Activated T-helper 1 cell treated with anti-CD3 and anti-CD28 coated beads, Interleukin-12 subunit alpha, Interleukin-12 subunit beta, Interleukin-2, Interleukin-4 antibody, amounts not matched to agents 30 ng/mL and 10 ng/mL and 1 ng/mL, durations not matched to agents 14 hours and 24 hours and 36 hours (primary cell): ENCODE measurements at regions of chr1 and their contacts with region 1.

Region 1: DNA sequence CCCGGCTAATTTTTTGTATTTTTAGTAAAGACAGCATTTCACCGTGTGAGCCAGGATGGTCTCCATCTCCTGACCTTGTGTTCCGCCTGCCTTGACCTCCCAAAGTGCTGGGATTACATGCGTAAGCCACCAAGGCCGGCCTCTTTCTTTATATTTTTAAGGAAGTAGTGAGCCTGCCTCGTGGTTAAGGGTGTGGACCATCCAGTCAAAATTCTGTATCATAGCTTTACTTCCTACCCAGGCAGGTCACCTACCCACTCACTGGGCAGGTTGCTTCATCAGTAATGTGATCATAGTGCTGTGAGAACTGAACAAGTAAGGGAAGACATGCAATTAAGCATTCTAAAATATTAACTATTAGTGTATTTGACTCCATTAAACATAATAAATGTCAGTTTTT is 8.1 kb upstream of the ACOT7 start:
- DNase-seq: no peak
- H3K4me3 Mint-ChIP-seq: no peak overlapping the region
- H3K27ac Mint-ChIP-seq: no peak overlapping the region
- H3K4me1 Mint-ChIP-seq: peaks cover 7% of the 10 kb centered on the region
- H3K27me3 Mint-ChIP-seq: peaks cover 20% of the 10 kb centered on the region

Region 2: GRCh38 chr1:6343506-6344405 is 57.9 kb before region 1 on chr1:
- intact Hi-C with region 1: loop called (anchors 1 kb)
- DNase-seq: peak; percentile 58
- H3K4me3 Mint-ChIP-seq: no peak overlapping the region
- H3K27ac Mint-ChIP-seq: no peak overlapping the region
- H3K4me1 Mint-ChIP-seq: peaks cover 18% of the 10 kb centered on the region
- H3K27me3 Mint-ChIP-seq: peaks cover 1% of the 10 kb centered on the region

Region 3: GRCh38 chr1:6359216-6360116 is 42.2 kb before region 1 on chr1:
- intact Hi-C with region 1: loop called (anchors 1 kb)
- DNase-seq: peak; percentile 57
- H3K4me3 Mint-ChIP-seq: peak overlapping the region; percentile 64
- H3K27ac Mint-ChIP-seq: peak overlapping the region; percentile 89
- H3K4me1 Mint-ChIP-seq: peaks cover 46% of the 10 kb centered on the region
- H3K27me3 Mint-ChIP-seq: no peaks in the 10 kb centered on the region

Region 4: DNA sequence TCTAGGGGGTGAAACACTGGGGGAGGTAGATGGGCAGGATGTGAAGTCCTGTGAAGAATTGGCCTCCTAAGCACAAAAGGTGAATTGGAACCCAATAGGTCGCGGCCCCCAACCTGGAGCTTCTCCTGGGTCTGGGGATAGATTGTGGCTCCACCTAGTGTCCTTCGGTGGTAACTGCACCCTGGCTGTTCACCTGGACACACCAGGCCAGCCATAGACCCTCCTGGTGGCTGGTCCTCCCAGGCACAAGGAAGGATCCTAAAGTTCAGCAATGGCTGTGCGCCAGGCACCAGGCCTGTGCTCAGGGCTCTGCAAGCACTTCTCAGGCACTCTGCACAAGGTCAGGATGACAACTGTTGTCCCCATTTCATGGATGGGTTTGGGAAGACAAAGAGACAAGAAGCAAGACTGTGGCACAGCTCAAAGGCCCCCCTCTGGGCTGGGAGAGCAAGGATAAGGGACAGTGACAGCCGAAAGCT is 36.4 kb after region 1 on chr1:
- intact Hi-C with region 1: loop called (anchors 1 kb)
- DNase-seq: peak; percentile 61
- H3K4me3 Mint-ChIP-seq: no peak overlapping the region
- H3K27ac Mint-ChIP-seq: no peak overlapping the region
- H3K4me1 Mint-ChIP-seq: peaks cover 5% of the 10 kb centered on the region
- H3K27me3 Mint-ChIP-seq: peaks cover 46% of the 10 kb centered on the region